Aorta (tissue), 5 donors: ENCODE measurements at regions of chr6 and their contacts with region 1.

Region 1: DNA sequence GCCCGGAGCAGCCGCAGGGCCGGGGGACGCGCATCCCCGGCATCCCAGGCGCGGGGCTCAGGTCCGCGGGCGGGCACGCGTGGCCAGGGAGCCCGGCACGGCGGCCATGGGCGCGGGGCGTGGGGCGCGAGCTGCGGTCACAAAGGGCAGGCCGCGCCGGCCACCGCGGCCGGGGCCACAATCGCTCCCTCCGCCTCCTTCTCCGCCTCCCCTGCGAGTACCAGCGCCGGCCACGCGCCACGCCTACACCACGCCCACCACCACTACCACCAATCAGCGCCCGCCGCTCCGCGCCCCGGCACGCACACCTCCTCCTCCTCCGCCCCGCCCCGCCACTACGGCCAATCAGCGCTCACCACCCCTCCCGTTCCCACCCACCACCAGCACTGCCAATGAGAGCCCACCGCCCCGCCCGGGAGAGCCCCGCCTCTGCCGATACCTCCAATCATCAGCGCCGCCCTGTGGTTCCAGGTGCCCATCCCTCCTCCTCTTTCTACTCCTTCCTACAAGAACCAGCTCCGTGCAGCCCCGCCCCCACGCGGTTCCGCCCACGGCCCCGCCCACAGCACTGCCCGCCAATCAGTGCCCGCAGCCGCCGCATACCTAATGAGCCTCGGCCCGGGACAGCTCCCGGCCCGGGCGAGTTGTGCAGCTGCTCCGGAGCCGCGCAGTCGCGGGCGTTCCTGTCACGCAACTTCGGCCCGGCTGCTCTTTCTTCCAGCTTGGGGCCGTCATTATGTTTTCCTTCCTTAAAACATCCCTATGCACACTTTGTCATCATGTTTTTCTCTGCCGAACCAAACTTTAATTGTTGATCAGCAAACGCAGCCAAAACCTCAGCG is at the start of gene RPS6KA2:
- DNase-seq: peak; percentile 100
- ATAC-seq: peak; percentile 98
- H3K4me3 ChIP-seq: peak within 1 kb of the TSS; percentile 82 to 93
- H3K27ac ChIP-seq: peak within 1 kb of the TSS in 1 of 2 donors; percentile 76
- H3K4me1 ChIP-seq: no peaks in the 10 kb centered on the region
- H3K27me3 ChIP-seq: no peaks in the 10 kb centered on the region
- total RNA-seq, gene RPS6KA2: 43.2 to 52.7 TPM

Region 2: DNA sequence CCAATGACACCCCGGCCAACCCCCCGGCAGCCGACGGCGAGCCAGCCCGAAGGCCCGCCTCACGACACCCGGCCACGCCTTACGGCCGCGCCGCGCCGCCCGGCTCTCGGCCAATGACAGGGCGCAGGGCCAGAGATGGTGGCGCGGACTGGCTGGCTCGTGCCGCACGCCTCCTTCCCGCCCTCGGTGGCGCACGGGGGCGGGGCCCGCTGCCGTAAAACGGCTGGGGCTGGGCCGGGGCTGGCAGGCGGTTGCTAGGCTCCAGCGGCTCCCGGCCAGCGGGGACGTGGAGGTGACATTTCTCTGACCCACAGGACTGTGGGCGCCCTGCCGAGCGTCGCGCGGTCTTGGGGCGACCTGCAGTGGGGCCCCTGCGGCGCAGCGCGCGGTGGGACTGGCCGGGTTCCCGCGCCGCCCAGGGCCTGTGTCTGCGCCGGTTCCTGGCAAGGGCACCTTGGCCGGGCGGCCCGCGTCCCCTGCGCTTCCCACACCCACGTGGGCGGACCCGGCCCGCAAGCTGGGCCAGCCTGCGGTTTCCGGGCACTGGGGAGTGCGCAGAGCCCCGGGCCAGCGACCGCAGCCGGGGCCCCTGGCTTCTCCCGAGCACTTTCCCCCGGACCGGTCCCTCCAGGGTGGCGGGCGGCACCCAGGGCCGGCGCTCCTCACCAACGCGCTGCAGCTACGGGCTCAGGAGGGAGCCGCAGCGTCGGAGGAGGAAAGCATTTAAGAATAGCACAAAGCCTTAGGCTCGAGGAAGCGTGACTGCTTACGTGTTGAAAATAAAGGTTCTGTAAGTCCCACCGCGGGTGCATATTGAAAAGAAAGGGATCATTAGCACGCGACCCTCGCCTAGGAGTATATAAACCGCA is 244.1 kb before region 1 on chr6 and contains the start of gene MPC1:
- intact Hi-C with region 1: loop called in 1 of 2 experiments (anchors 5 kb)
- DNase-seq: peak; percentile 97 to 99
- ATAC-seq: peak; percentile 99
- H3K4me3 ChIP-seq: peak within 1 kb of the TSS; percentile 46 to 77
- H3K27ac ChIP-seq: peak within 1 kb of the TSS; percentile 5 to 83
- H3K4me1 ChIP-seq: no peaks in the 10 kb centered on the region
- H3K27me3 ChIP-seq: no peaks in the 10 kb centered on the region
- total RNA-seq, gene MPC1: 36.7 to 71.7 TPM

Region 3: GRCh38 chr6:166466178-166467122 is 160.8 kb before region 1 on chr6:
- intact Hi-C with region 1: loop called in 1 of 2 experiments (anchors 5 kb)
- DNase-seq: no peak
- ATAC-seq: peak; percentile 47
- H3K4me3 ChIP-seq: no peak overlapping the region
- H3K27ac ChIP-seq: peak overlapping the region in 1 of 2 donors; percentile 65
- H3K4me1 ChIP-seq: no peaks in the 10 kb centered on the region
- H3K27me3 ChIP-seq: no peaks in the 10 kb centered on the region

Region 4: GRCh38 chr6:166556871-166557322 is 70.4 kb before region 1 on chr6:
- intact Hi-C with region 1: loop called in 1 of 2 experiments (anchors 2 kb)
- DNase-seq: peak; percentile 94 to 96
- ATAC-seq: peak; percentile 94
- H3K4me3 ChIP-seq: no peak overlapping the region
- H3K27ac ChIP-seq: peak overlapping the region in 1 of 2 donors; percentile 9
- H3K4me1 ChIP-seq: peaks cover 0 to 4% of the 10 kb centered on the region in 2 donors
- H3K27me3 ChIP-seq: no peaks in the 10 kb centered on the region

Region 5: DNA sequence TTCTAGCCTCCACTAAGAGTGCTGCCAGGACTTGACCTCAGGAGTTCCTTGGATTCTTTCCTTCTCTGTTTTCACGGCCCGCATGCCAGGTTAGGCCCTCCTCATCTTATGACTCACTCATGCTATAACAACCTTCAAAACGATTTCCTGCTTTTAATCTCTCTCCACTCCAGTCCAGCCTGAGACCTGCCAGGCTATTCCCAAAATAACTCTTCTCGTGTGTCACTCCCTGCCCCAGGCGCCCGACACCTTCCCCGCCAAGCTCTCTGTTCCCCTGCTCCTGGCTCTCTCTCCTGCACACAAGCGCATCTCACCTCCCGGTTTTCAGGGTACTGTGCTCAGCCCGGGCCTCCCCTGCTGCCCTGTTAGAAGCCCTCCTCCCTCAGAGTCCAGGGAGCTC is 63.9 kb after region 1 on chr6:
- intact Hi-C with region 1: loop called in 1 of 2 experiments (anchors 5 kb)
- DNase-seq: peak in 1 of 2 donors; percentile 59
- ATAC-seq: no peak
- H3K4me3 ChIP-seq: no peak overlapping the region
- H3K27ac ChIP-seq: no peak overlapping the region
- H3K4me1 ChIP-seq: no peaks in the 10 kb centered on the region
- H3K27me3 ChIP-seq: no peaks in the 10 kb centered on the region

Region 6: DNA sequence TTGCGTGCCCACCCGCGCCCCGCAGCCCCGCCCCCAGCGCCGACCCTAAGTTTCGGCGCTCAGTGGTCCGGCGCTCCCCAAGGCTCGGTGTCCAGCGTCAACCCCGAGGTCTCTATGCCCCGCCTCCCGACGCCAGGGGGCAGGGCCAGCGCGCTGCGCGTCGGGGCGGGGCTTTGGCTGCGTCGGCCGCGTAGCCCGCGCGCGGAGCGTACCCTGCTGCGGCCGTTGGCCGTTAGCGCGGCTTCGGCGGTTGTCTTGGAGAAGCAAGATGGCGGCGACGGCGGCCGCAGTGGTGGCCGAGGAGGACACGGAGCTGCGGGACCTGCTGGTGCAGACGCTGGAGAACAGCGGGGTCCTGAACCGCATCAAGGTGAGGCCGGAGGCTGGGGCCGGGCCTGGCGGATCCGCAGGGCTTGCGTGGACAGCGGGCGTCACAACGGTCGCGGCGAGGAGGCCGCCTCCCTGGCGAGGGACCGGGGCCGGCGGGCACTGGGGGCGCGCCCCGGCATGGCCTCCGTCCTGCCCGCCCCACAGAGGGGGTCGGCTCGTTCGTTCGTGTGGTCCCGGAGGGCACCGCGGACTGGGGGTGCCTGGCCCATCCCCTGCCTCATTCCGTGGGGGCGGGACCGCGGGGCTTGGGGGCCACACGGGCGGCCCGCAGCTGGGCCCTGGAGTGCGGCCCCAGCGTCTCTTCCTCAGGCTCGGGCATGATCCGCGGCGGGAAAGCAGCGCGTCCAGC is 372.1 kb after region 1 on chr6 and contains the start of gene CEP43:
- intact Hi-C with region 1: loop called (anchors 5 to 10 kb)
- DNase-seq: peak; percentile 97
- ATAC-seq: peak; percentile 100
- H3K4me3 ChIP-seq: peak within 1 kb of the TSS; percentile 89 to 95
- H3K27ac ChIP-seq: peak within 1 kb of the TSS in 1 of 2 donors; percentile 10
- H3K4me1 ChIP-seq: no peaks in the 10 kb centered on the region
- H3K27me3 ChIP-seq: no peaks in the 10 kb centered on the region
- total RNA-seq, gene CEP43: 8.4 to 13.6 TPM